Activated T-helper 2 cell treated with anti-CD3 and anti-CD28 coated beads, Interferon-gamma antibody, Interleukin-2, Interleukin-4, amounts not matched to agents 10 μg/mL and 5 μg/mL and 100 μg/mL, durations not matched to agents 14 hours and 24 hours and 36 hours (primary cell): ENCODE measurements at regions of chr13 and their contacts with region 1.

Region 1: DNA sequence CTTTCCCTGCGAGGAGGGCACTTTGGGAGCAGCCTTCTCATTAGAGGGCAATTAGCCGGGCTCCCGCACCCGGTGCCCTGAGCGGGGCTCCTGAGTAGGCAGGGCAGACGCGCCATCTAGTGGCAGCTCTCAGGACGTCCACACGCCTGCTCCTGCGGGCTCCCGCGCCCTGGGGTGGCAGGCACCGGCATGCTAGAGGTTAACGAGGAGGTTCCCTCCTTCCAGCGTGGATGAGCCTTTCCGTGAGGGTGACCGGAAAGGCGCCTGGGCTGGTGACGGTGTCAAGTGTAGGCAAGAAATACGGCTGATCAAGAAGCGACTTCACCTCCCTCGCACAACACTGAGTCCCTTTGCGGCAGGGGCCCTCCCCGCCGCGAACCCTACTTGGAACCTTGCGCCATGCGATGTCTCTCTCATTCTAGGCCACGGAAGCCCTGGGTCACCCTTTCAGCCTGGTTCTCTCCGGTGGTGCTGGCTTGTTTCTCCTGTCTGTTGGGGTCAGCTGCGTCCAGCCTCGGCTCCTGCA is 67.7 kb downstream of the ALOX5AP start:
- DNase-seq: peak; percentile 76
- H3K4me3 Mint-ChIP-seq: peak overlapping the region; percentile 18
- H3K27ac Mint-ChIP-seq: no peak overlapping the region
- H3K4me1 Mint-ChIP-seq: peaks cover 10% of the 10 kb centered on the region
- H3K27me3 Mint-ChIP-seq: no peaks in the 10 kb centered on the region

Region 2: GRCh38 chr13:30408319-30409101 is 394.5 kb before region 1 on chr13:
- intact Hi-C with region 1: loop called (anchors 2 kb)
- DNase-seq: peak; percentile 89
- H3K4me3 Mint-ChIP-seq: no peak overlapping the region
- H3K27ac Mint-ChIP-seq: peak overlapping the region; percentile 40
- H3K4me1 Mint-ChIP-seq: peaks cover 21% of the 10 kb centered on the region
- H3K27me3 Mint-ChIP-seq: no peaks in the 10 kb centered on the region

Region 3: GRCh38 chr13:30572859-30573275 is 230.1 kb before region 1 on chr13:
- intact Hi-C with region 1: loop called (anchors 5 kb)
- DNase-seq: no peak
- H3K4me3 Mint-ChIP-seq: peak overlapping the region; percentile 62
- H3K27ac Mint-ChIP-seq: peak overlapping the region; percentile 18
- H3K4me1 Mint-ChIP-seq: peaks cover 54% of the 10 kb centered on the region
- H3K27me3 Mint-ChIP-seq: peaks cover 2% of the 10 kb centered on the region

Region 4: GRCh38 chr13:30654430-30654829 is 148.6 kb before region 1 on chr13:
- intact Hi-C with region 1: loop called (anchors 2 kb)
- DNase-seq: peak; percentile 56
- H3K4me3 Mint-ChIP-seq: peak overlapping the region; percentile 59
- H3K27ac Mint-ChIP-seq: peak overlapping the region; percentile 76
- H3K4me1 Mint-ChIP-seq: peaks cover 36% of the 10 kb centered on the region
- H3K27me3 Mint-ChIP-seq: no peaks in the 10 kb centered on the region

Region 5: GRCh38 chr13:30673669-30674521 is 129.1 kb before region 1 on chr13:
- intact Hi-C with region 1: loop called (anchors 1 kb)
- DNase-seq: peak; percentile 85
- H3K4me3 Mint-ChIP-seq: peak overlapping the region; percentile 86
- H3K27ac Mint-ChIP-seq: peak overlapping the region; percentile 73
- H3K4me1 Mint-ChIP-seq: peaks cover 18% of the 10 kb centered on the region
- H3K27me3 Mint-ChIP-seq: peaks cover 29% of the 10 kb centered on the region